GM13976 (cell line): ENCODE measurements at regions of chr9 and their contacts with region 1.

Region 1: GRCh38 chr9:83937911-83938323 is 16.7 kb upstream of the KIF27 start:
- DNase-seq: peak; percentile 57
- CTCF ChIP-seq: peak; percentile 54

Region 2: DNA sequence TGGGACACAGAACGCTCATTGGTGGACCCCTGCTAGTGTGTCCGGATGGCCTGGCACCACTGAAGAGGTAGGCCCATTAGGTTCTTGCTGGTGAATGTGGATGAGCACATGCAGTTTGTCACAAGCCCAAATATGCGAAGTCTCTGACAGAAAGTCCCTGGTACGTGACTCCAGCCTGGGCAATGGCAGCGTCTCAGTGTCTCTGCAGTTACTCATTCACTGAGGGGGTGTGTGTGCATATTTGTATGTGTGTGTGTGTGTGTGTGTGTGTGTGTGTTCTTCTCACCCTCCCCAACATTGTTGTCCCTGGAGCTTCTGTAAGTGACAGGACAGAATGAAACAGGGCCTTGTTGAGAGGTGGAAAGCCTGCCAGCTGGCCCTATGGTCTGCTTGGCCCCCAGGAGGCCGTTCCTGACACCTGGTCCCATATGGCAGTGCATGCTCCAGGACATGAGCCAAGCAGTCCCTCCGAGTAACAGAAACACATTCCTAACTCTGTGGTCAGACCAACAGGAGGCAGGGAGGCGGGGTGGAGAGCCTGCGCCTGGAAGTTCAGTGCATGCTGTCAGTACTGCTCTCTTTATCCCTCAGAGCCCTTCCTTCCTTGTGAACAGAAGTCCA is 232.7 kb after region 1 on chr9:
- in situ Hi-C with region 1: loop called (anchors 10 kb)
- DNase-seq: no peak
- CTCF ChIP-seq: no peak

Region 3: GRCh38 chr9:84230355-84231145 is 292.6 kb after region 1 on chr9:
- in situ Hi-C with region 1: no loop called
- DNase-seq: no peak
- CTCF ChIP-seq: no peak

Region 4: DNA sequence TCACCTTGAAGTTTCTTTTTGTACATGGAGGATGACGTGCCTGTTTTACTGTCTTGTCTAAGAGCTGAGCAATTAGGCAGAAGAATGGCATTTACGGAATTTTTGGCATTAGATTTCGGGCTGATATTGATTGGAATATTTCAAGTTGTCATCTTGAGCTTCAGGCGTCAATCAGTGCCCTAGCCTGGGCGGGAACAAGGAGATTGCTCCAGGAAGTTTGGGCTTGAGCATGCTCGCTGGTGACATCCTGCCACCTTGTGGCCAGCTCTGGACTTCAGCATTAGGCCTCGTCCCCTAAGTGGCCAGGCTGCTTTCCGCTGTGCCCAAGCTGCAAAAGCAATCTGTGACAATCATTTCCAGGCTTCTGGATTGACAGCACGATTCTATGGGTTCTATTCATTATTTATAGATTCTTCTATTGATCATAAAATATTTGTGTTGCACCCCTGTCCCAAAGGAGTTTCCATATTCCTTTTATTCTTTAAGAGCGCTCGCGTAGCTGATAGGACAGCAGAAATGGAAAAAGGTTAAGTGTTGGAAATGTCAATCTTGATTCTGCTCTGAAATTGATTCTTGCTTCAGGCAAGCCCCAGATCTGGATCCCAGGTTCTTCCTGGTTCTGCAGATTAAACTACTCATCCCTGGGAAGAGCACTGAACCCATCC is 323.3 kb after region 1 on chr9:
- in situ Hi-C with region 1: loop called (anchors 10 kb)
- DNase-seq: peak; percentile 59
- CTCF ChIP-seq: peak; percentile 78

Region 5: GRCh38 chr9:85056203-85056572 is 1118.3 kb after region 1 on chr9:
- in situ Hi-C with region 1: no loop called
- DNase-seq: peak; percentile 43
- CTCF ChIP-seq: no peak